ENCODE measurements at regions of chr2 and their contacts with region 1.

Region 1: GRCh38 chr2:112645310-112646101 is at the start of gene SLC20A1:
- DNase-seq: peak; percentile 96
- H3K4me3 Mint-ChIP-seq: peak within 1 kb of the TSS; percentile 99
- H3K27ac Mint-ChIP-seq: peak within 1 kb of the TSS; percentile 89
- H3K4me1 Mint-ChIP-seq: peaks cover 51% of the 10 kb centered on the region
- H3K27me3 Mint-ChIP-seq: no peaks in the 10 kb centered on the region
- total RNA-seq, gene SLC20A1: 73.1 to 73.5 TPM

Region 2: GRCh38 chr2:112054847-112055729 is 590.4 kb before region 1 on chr2 and contains the start of gene TMEM87B:
- CTCF ChIA-PET with region 1: no interaction called
- intact Hi-C with region 1: loop called (anchors 2 kb)
- DNase-seq: peak; percentile 99
- H3K4me3 Mint-ChIP-seq: peak within 1 kb of the TSS; percentile 97
- H3K27ac Mint-ChIP-seq: peak within 1 kb of the TSS; percentile 99
- H3K4me1 Mint-ChIP-seq: peaks cover 42% of the 10 kb centered on the region
- H3K27me3 Mint-ChIP-seq: no peaks in the 10 kb centered on the region
- total RNA-seq, gene TMEM87B: 10.5 to 12.0 TPM

Region 3: DNA sequence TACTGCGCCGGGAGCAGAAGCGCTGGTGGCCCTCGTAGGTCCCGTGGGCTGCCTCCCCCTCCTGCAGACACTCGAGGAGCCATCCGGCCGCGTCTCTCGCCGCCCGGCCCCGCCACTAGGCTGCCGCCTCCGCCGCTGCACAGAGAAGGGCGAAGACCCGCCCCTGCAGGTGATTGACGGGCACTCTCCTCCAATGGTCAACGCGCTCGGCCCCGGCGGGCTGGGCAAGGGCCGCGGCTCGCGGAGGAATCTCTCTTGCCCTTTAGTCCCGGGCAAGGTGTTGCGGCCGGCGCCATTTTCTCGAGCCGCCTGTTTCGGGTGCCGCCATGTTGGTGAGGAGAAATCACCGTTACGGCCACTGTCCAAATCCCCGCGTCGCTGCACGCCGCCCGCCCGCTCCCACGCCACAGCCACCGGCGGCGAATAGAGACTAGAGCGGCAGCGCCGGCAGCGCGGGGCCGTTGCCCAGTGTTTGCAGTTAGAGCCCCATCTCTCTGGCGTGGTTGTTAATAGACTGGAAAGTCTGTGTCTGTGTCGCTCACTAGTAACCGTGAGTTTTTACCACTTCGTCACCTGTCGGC is 370.1 kb before region 1 on chr2 and contains the start of gene ZC3H6:
- CTCF ChIA-PET with region 1: no interaction called
- intact Hi-C with region 1: loop called (anchors 1 kb)
- DNase-seq: peak; percentile 99
- H3K4me3 Mint-ChIP-seq: peak within 1 kb of the TSS; percentile 93
- H3K27ac Mint-ChIP-seq: peak within 1 kb of the TSS; percentile 97
- H3K4me1 Mint-ChIP-seq: peaks cover 24% of the 10 kb centered on the region
- H3K27me3 Mint-ChIP-seq: no peaks in the 10 kb centered on the region
- total RNA-seq, gene ZC3H6: 18.5 to 18.7 TPM

Region 4: DNA sequence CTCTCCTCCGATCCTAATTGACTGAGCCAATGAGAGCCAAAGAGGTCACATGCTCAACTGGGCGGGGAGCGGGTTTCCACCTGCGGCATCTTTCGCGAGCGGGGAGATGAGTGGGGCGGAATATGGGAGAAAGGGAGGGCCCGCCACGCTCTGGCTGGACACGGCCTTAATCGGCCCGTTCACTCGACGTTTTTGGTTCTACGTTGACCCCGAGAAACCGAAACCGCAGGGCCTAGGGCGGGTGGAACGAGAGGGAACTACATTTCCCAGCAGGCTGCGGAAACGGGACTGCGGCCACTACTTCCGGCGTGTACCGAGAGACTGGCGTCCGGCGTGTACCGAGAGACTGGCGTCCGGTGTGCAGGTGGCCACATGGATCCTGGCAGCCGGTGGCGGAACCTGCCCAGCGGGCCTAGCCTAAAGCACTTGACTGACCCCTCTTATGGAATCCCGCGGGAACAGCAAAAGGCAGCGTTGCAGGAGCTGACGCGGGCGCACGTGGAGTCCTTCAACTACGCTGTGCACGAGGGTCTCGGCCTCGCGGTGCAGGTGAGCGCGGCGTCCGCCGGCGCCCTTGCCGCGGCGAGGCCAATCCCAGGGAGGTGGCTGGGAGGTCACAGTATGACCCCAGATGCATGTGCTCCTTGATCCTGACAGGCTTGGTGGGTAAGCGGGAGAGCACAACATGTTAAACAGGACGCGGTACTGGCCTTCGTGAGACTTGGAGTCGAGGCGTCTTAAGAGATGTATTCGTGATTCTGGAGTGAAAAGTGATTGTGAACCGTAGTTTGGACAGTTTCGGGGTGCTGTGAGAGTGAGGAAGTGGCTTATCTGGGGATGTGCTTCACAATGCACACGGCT is 103.2 kb before region 1 on chr2 and contains the start of gene POLR1B:
- CTCF ChIA-PET with region 1: no interaction called
- intact Hi-C with region 1: loop called (anchors 1 kb)
- DNase-seq: peak; percentile 82
- H3K4me3 Mint-ChIP-seq: no peak within 1 kb of the TSS
- H3K27ac Mint-ChIP-seq: no peak within 1 kb of the TSS
- H3K4me1 Mint-ChIP-seq: peaks cover 19% of the 10 kb centered on the region
- H3K27me3 Mint-ChIP-seq: no peaks in the 10 kb centered on the region
- total RNA-seq, gene POLR1B: 34.5 to 36.1 TPM

Region 5: GRCh38 chr2:112692496-112692911 is 47.0 kb after region 1 on chr2:
- CTCF ChIA-PET with region 1: interaction called, 4 read pairs
- intact Hi-C with region 1: loop called (anchors 1 kb)
- DNase-seq: peak; percentile 89
- H3K4me3 Mint-ChIP-seq: peak overlapping the region; percentile 4
- H3K27ac Mint-ChIP-seq: peak overlapping the region; percentile 80
- H3K4me1 Mint-ChIP-seq: peaks cover 29% of the 10 kb centered on the region
- H3K27me3 Mint-ChIP-seq: no peaks in the 10 kb centered on the region

Region 6: DNA sequence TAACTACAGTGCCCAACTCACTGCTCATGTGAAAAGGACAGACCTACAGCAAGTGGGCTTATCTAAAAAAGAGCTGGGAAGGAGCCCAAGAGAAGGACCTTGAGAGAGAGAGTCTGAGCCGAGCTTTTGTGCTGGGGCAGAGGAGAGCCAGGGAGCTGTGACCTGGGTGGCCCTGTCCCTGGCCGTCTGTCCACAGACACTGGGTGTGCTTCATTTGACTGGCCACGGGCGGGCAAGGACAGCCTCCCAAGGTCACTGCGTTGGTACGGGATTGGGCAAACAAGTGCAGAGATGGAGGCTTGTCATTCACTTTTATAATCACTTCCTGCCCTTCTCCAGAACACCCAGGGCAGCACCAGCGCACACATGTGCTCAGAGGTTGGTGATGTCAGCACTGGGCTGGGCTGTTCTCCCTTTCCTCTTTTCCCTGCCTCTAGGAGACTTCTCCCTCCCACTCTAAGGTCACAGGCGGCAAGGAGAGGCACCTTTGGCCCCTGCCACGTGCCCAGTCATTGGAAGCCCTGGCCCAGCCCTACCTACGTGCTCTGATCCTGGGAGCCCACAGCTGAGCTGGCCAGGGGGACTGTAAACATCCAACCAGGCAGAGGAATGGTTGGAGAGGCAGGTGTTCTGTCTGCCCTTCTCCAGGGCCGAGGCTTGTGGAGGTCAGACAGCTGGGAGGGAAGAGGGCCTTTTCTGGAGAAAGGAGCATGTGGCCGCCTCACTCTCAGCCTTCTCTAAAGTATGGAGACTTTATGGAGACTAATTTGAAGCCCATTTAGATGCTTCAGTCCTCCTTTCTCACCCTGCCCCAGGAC is 521.8 kb after region 1 on chr2:
- CTCF ChIA-PET with region 1: no interaction called
- intact Hi-C with region 1: loop called (anchors 5 kb)
- DNase-seq: peak; percentile 74
- H3K4me3 Mint-ChIP-seq: peak overlapping the region; percentile 61
- H3K27ac Mint-ChIP-seq: peak overlapping the region; percentile 99
- H3K4me1 Mint-ChIP-seq: peaks cover 71% of the 10 kb centered on the region
- H3K27me3 Mint-ChIP-seq: no peaks in the 10 kb centered on the region

Measured in activated naive CD4-positive, alpha-beta T cell treated with anti-CD3 and anti-CD28 coated beads for 36 hours (primary cell).